Activated T-helper 2 cell treated with anti-CD3 and anti-CD28 coated beads, Interferon-gamma antibody, Interleukin-2, Interleukin-4, amounts not matched to agents 10 μg/mL and 5 μg/mL and 100 μg/mL, durations not matched to agents 14 hours and 24 hours and 36 hours (primary cell): ENCODE measurements at regions of chr12 and their contacts with region 1.

Region 1: GRCh38 chr12:14257734-14258574 is 107.5 kb upstream of the ATF7IP start:
- DNase-seq: peak; percentile 84
- H3K4me3 Mint-ChIP-seq: peak overlapping the region; percentile 60
- H3K27ac Mint-ChIP-seq: peak overlapping the region; percentile 95
- H3K4me1 Mint-ChIP-seq: peaks cover 48% of the 10 kb centered on the region
- H3K27me3 Mint-ChIP-seq: no peaks in the 10 kb centered on the region

Region 2: DNA sequence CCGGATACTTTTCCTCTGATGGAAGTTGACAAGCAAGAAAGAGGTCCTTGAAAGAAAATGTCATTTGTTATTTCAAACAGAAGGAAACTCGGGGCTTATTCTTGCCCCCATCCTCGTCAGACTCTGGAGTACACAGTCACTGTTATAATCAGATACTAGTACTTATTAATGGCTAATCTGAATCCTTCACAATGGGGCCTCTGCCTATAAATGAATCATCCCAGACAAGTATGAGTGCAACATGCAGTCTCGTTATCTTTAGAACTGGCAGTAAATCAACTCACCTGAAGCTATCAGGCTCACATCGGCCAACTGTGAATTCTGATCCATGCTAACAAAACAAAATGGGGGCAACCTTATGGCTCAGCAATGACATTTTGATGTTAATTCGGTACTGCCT is 493.2 kb before region 1 on chr12:
- intact Hi-C with region 1: no loop called
- DNase-seq: no peak
- H3K4me3 Mint-ChIP-seq: no peak overlapping the region
- H3K27ac Mint-ChIP-seq: no peak overlapping the region
- H3K4me1 Mint-ChIP-seq: no peaks in the 10 kb centered on the region
- H3K27me3 Mint-ChIP-seq: no peaks in the 10 kb centered on the region

Region 3: GRCh38 chr12:14216405-14217294 is 41.3 kb before region 1 on chr12:
- intact Hi-C with region 1: loop called (anchors 1 kb)
- DNase-seq: no peak
- H3K4me3 Mint-ChIP-seq: no peak overlapping the region
- H3K27ac Mint-ChIP-seq: peak overlapping the region; percentile 15
- H3K4me1 Mint-ChIP-seq: peaks cover 17% of the 10 kb centered on the region
- H3K27me3 Mint-ChIP-seq: peaks cover 4% of the 10 kb centered on the region

Region 4: DNA sequence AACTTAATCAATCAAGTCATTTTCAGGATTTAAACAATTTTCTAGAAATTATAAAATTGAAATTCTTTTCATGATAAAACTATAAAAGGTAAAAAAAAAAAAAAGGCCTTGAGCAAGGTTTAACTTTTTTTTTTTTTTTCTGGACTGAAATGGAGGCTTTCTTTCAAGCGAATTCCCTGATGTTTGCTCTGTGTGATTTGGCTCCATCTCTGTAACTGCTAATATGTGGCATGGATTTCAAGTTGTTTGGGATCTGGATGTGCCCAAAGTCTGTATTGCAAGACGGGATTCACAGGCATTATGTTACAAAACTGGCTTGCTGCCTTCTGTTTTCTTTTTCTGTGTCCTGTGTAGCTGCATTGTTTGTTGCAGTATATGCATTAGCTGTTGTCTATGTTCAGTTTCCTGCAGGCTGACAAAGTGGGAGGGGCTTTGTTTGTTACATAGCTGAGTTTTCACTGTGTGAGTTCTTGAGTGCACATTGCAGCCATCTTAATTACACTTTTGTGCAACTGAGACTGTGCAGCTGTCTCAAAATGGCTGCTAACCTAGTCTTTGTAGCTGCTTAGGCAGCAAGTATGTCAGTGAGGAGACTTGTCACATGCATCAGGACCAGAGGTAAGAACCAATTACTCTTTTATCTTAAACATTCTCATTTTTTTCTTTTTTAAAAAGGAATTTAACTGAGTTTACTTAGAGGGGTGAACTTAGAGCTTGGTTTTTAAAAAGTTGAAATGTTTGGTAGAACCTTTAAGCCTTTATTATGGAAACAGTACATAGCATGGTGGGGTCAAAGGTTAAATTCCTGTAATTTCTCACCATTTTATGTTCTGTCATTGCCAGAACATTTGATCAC is 127.1 kb after region 1 on chr12:
- intact Hi-C with region 1: loop called (anchors 1 kb)
- DNase-seq: peak; percentile 72
- H3K4me3 Mint-ChIP-seq: peak overlapping the region; percentile 87
- H3K27ac Mint-ChIP-seq: peak overlapping the region; percentile 86
- H3K4me1 Mint-ChIP-seq: peaks cover 45% of the 10 kb centered on the region
- H3K27me3 Mint-ChIP-seq: no peaks in the 10 kb centered on the region

Region 5: GRCh38 chr12:14417715-14418114 is 159.8 kb after region 1 on chr12:
- intact Hi-C with region 1: loop called (anchors 1 kb)
- DNase-seq: peak; percentile 64
- H3K4me3 Mint-ChIP-seq: peak overlapping the region; percentile 77
- H3K27ac Mint-ChIP-seq: peak overlapping the region; percentile 92
- H3K4me1 Mint-ChIP-seq: peaks cover 42% of the 10 kb centered on the region
- H3K27me3 Mint-ChIP-seq: no peaks in the 10 kb centered on the region

Region 6: DNA sequence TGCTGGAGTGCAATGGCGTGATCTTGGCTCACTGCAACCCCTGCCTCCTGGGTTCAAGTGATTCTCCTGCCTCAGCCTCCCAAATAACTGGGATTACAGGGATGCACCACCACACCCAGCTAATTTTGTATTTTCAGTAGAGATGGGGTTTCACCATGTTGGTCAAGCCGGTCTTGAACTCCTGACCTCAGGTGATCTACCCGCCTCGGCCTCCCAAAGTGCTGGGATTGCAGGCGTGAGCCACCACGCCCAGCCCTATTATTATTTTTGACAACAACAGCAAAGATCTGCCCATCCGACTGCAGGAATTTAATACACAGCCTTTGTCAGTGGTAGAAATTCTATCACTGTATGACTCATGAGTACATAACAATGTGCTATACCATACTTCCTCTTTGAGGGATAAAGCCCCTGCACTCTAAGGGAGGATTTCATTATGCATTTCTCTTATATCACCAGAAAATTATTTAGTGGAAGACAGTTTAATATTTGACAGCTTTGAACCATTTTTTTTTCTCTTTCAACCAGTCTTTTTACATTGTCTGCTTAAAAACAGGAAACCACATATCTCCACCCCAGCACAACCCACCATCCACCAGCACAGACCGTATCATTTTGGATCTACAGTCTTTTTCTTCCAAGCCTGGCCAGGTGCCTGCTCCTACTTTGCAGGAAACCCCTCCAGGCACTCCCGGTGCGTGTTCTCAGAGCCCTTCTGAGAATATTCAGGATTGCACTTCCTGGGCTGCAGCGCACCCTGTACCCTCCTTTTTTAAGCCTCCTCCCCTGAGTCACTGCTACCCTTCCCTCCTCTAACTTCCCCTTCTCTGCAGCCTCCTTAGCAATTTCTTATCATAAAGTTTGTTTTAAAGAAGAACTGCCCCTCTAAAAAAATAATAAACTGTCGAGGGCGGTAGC is 702.9 kb after region 1 on chr12:
- intact Hi-C with region 1: loop called (anchors 1 kb)
- DNase-seq: peak; percentile 43
- H3K4me3 Mint-ChIP-seq: peak overlapping the region; percentile 96
- H3K27ac Mint-ChIP-seq: peak overlapping the region; percentile 97
- H3K4me1 Mint-ChIP-seq: peaks cover 58% of the 10 kb centered on the region
- H3K27me3 Mint-ChIP-seq: no peaks in the 10 kb centered on the region